Left lung (tissue), 14 donors: ENCODE measurements at regions of chr19 and their contacts with region 1.

Region 1: DNA sequence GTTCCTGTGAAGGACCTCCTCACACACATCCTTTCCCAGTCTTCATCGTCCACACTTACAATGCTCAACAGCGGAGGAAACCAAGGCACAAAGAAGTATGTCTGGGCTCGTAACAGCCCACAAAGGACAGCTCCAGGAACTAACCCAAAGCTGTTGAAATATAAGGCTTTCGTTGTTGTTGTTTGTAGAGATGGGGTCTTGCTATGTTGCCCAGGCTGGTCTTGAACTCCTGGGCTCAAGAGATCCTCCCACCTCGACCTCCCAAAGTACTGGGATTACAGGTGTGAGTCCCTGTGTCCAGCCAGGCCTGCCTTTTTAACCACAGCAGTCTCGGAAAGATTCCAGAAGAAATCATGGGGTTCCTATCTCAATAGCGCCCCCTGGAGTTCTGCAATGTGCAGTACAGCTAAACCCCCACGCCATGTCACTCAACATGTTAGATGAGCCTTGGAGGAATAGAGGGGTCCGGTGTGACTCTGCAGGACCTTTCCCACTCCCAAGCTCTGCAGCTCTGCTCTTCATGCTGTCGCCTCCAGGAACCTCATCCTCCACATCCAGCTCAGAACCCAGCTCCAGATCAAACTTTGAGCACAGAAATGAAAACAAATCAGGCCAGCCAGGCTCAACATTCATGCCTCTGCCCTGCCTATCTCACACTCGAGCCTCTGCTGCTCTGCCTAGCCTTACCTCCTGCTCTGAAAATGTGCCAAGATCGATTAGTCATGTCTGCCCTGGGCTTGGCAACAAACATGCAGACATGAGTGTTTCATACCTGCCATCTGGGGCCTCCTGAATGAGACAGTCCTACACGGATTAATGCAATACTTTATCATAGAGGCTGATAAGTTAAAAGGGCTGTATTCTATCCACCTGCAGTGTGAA is 7.5 kb downstream of the PLA2G4C start:
- DNase-seq: no peak
- ATAC-seq: peak; percentile 48
- H3K4me3 ChIP-seq: no peak overlapping the region
- H3K27ac ChIP-seq: no peak overlapping the region
- H3K4me1 ChIP-seq: peaks cover 5 to 8% of the 10 kb centered on the region in 2 donors
- H3K27me3 ChIP-seq: no peaks in the 10 kb centered on the region
- CTCF ChIP-seq: peak; percentile 42 to 76

Region 2: GRCh38 chr19:47790398-47790814 is 312.7 kb before region 1 on chr19:
- intact Hi-C with region 1: no loop called
- DNase-seq: peak; percentile 34 to 94 (median 74)
- ATAC-seq: peak; percentile 88
- H3K4me3 ChIP-seq: no peak overlapping the region
- H3K27ac ChIP-seq: no peak overlapping the region
- H3K4me1 ChIP-seq: peaks cover 0 to 7% of the 10 kb centered on the region in 2 donors
- H3K27me3 ChIP-seq: no peaks in the 10 kb centered on the region
- CTCF ChIP-seq: peak; percentile 70 to 86

Region 3: DNA sequence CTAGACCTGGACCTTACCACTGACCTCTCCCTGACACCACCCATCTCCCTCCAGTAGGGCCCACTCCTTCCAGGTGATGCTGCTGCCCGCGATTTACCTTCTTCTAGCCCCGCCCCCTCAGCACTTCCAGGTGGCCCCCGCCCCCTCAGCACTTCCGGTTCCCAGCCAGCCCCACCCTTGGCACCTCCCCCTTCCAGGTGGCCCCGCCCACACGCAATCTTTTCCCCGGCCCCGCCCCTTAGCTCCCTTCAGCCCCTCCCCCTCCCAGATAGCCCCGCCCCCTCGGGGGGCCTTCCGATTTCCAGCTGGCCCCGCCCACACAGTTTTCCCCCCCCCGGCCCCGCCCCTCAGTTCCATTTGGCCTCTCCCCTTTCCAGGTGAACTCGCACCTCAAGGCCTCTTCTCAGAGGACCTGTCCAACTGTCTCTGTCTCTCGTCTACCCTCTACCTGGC is 66.5 kb after region 1 on chr19:
- intact Hi-C with region 1: loop called in 1 of 2 experiments (anchors 10 kb)
- DNase-seq: peak in 3 of 4 donors; percentile 52 to 94 (median 85)
- ATAC-seq: peak; percentile 77
- H3K4me3 ChIP-seq: peak overlapping the region; percentile 84 to 87
- H3K27ac ChIP-seq: peak overlapping the region; percentile 91
- H3K4me1 ChIP-seq: peaks cover 7 to 21% of the 10 kb centered on the region in 2 donors
- H3K27me3 ChIP-seq: no peaks in the 10 kb centered on the region
- CTCF ChIP-seq: no peak